ENCODE measurements at regions of chr9 and their contacts with region 1.

Region 1: GRCh38 chr9:121573717-121574485 is 74.3 kb upstream of the GGTA1 start:
- DNase-seq: no peak

Region 2: DNA sequence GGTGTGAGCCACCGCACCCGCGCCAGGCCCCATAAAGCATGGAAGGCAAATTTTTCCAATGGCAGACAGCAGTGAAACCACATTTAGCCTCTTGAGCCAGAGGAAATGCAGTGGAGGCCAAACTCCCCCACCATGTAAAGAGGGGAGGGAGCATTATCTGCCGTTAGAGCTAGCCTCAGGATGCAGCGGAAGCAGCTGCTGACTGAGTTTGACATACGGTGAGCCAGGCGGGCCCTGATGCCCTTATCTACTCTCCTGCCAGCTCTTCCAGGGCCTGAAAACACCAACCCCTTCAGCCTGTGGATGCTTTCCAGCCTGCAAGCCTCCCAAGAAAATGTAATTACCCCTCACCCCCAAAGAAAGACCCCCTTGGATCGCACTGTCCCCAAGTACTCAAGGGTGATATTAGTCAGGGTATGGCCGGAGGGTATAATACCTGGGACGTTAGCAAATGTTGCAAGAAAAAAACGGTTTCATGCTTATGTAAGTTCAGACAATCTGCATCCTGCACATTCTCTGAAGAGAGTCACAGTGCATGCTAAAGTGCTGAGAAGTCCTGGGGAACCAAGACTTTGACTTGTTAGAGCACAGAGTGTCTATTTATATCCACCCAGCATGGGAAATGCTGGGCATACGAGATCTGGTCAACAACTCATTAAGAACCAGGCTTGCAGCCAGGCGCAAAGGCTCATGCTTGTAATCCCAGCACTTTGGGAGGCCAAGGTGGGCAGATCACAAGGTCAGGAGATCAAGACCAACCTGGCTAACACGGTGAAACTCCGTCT is 62.9 kb before region 1 on chr9:
- intact Hi-C with region 1: loop called in 1 of 2 experiments (anchors 10 kb)
- DNase-seq: no peak

Region 3: DNA sequence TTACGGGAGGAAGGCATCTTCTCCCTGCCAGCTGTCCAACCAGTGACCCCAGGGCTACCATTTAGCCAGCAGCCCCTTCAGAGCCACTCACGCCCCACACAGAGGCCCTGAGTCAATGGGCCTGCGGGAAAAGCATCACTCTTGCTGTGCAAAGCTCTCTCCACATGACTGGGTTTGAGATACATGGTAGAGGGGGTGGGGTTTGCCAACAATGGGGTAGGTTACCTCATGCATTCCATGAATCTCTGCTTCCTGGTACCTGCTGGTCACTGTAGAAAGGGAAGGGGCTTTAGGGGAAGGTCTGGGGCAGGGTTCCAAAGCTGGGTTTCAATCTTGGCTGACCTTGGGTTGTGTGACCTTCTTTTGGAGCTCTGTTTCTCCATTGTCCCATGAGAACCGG is 542.1 kb after region 1 on chr9:
- intact Hi-C with region 1: no loop called
- DNase-seq: no peak

Measured in posterior vena cava (tissue), 2 donors.